BJ (cell line): ENCODE measurements at regions of chr11 and their contacts with region 1.

Region 1: GRCh38 chr11:66976048-66976467 is 954 bp downstream of the C11orf86 start:
- DNase-seq: no peak
- H3K4me3 ChIP-seq: no peak overlapping the region
- H3K27me3 ChIP-seq: no peaks in the 10 kb centered on the region
- CTCF ChIP-seq: peak; percentile 77

Region 2: GRCh38 chr11:66842896-66843775 is 132.9 kb before region 1 on chr11 and contains the start of gene RCE1:
- CTCF ChIA-PET with region 1: interaction called, 25 read pairs
- POLR2A ChIA-PET with region 1: interaction called, 7 read pairs
- DNase-seq: no peak
- H3K4me3 ChIP-seq: peak within 1 kb of the TSS; percentile 90
- H3K27me3 ChIP-seq: no peaks in the 10 kb centered on the region
- CTCF ChIP-seq: no peak
- polyA plus RNA-seq, gene RCE1: 12.0 and 20.1 TPM in 2 replicates

Region 3: DNA sequence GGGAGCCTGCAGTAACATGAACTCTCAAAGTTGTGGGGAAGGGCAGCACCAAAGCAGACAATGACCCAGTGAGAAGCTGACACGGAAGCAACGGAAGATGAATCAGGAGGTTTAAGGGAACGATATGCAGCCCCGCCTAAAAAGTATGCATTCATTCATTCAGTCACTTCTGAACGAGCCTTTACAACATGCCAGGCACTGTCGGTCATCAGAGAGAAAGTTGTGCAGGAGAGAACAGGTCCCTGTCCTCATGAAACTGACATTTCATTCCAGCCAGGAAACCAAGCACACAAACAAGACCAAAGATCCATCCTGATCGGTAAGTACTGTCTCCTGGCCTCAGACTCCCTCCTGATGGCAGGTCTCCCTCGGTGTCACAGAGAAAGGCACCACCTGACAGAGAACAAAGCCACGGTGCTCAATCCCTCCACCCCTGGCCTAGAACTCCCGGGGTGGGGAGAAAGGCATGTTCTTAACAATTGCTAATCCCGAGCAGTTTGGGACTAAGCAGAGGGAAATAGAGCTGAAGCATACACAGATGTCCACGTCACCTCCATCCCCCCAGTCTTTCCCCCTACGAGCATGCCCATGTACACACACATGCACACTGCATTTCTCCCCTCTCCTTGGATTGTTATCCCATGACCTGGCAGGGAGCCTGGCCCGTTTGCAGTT is 69.9 kb before region 1 on chr11:
- CTCF ChIA-PET with region 1: no interaction called
- POLR2A ChIA-PET with region 1: no interaction called
- DNase-seq: no peak
- H3K4me3 ChIP-seq: no peak overlapping the region
- H3K27me3 ChIP-seq: no peaks in the 10 kb centered on the region
- CTCF ChIP-seq: no peak

Region 4: DNA sequence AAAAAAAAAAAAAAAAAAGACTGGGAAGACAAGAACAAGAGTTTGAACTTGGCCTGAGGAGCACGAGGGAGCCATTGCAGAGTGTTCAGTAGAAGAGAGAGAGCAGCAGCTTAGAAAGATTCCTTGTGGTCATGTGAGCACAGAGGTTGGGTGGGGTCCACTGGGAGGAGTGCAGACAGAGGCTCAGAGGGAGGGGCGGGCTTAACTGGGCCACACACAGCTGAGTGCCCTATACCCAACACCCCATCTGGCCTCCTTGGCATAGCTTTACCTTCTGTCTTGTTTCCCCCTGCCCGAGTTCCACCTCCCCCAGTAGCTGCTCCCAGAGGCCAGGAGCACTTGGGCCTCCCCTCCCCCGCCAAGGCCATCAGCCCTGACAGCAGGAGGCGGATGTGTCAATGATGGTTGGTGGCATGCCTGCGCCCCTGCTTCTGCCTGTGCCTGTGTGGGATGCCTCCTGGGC is 11.1 kb after region 1 on chr11:
- CTCF ChIA-PET with region 1: interaction called, 12 read pairs
- POLR2A ChIA-PET with region 1: no interaction called
- DNase-seq: no peak
- H3K4me3 ChIP-seq: no peak overlapping the region
- H3K27me3 ChIP-seq: no peaks in the 10 kb centered on the region
- CTCF ChIP-seq: no peak

Region 5: GRCh38 chr11:67099831-67100324 is 123.8 kb after region 1 on chr11:
- CTCF ChIA-PET with region 1: no interaction called
- POLR2A ChIA-PET with region 1: no interaction called
- DNase-seq: no peak
- H3K4me3 ChIP-seq: no peak overlapping the region
- H3K27me3 ChIP-seq: peaks cover 3% of the 10 kb centered on the region
- CTCF ChIP-seq: no peak